PC-9 (cell line): ENCODE measurements at regions of chr5 and their contacts with region 1.

Region 1: GRCh38 chr5:19314851-19315327 is 673.1 kb downstream of the CDH18 start:
- DNase-seq: peak; percentile 65 to 87
- H3K4me3 ChIP-seq: no peak overlapping the region
- H3K27ac ChIP-seq: no peak overlapping the region
- H3K4me1 ChIP-seq: 0 out of 2 replicates have a peak, but pooled peaks cover 5% of the 10 kb centered on the region
- H3K27me3 ChIP-seq: no peaks in the 10 kb centered on the region
- CTCF ChIP-seq: peak; percentile 38; the same call in 1 of the 2 replicates

Region 2: GRCh38 chr5:19240170-19240569 is 74.7 kb before region 1 on chr5:
- CTCF ChIA-PET with region 1: no interaction called
- POLR2A ChIA-PET with region 1: no interaction called
- intact Hi-C with region 1: loop called (anchors 2 kb)
- DNase-seq: peak; percentile 21 to 45
- H3K4me3 ChIP-seq: no peak overlapping the region
- H3K27ac ChIP-seq: no peak overlapping the region
- H3K4me1 ChIP-seq: no peaks in the 10 kb centered on the region
- H3K27me3 ChIP-seq: no peaks in the 10 kb centered on the region
- CTCF ChIP-seq: no peak